ENCODE measurements at regions of chr12 and their contacts with region 1.

Region 1: DNA sequence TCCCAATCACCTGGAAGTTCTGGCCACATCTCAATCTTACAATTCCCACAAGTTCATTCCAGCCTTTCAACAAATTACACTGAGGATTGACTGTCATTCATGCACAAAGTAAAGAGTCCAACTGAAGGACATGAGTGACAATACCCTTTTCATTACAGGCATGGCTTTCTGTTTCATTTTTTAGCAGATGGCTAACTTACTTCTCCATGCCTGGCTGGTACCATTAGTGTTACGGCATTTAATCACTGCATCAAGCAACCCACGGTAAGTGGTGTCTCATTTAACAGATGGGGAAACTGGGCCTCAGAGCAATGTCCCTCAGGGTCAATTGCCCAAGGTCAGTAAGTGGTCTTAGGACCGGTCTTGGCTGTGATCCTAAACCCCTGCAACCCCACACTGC is 114.4 kb downstream of the PRICKLE1 start:
- DNase-seq: no peak
- ATAC-seq: no peak

Region 2: GRCh38 chr12:42277396-42278127 is 197.5 kb before region 1 on chr12:
- intact Hi-C with region 1: no loop called
- DNase-seq: no peak
- ATAC-seq: no peak

Region 3: GRCh38 chr12:42426746-42427145 is 48.4 kb before region 1 on chr12:
- intact Hi-C with region 1: loop called in 1 of 2 experiments (anchors 5 kb)
- DNase-seq: no peak
- ATAC-seq: no peak

Measured in left cardiac atrium (tissue), 4 donors.